CD8-positive, alpha-beta T cell (primary cell): ENCODE measurements at regions of chr20 and their contacts with region 1.

Region 1: GRCh38 chr20:51624157-51624731 is 81.7 kb upstream of the NFATC2 start:
- DNase-seq: peak; percentile 22 to 69 (median 58)
- ATAC-seq: peak; percentile 52
- H3K4me3 ChIP-seq: no peak overlapping the region
- H3K4me3 Mint-ChIP-seq: no peak overlapping the region
- H3K27ac ChIP-seq: no peak overlapping the region
- H3K27ac Mint-ChIP-seq: no peak overlapping the region
- H3K4me1 ChIP-seq: no peaks in the 10 kb centered on the region
- H3K4me1 Mint-ChIP-seq: peaks cover 2% of the 10 kb centered on the region
- H3K27me3 ChIP-seq: no peaks in the 10 kb centered on the region
- H3K27me3 Mint-ChIP-seq: peaks cover 3% of the 10 kb centered on the region
- CTCF ChIP-seq: peak; percentile 69

Region 2: GRCh38 chr20:51220293-51220706 is 403.9 kb before region 1 on chr20:
- CTCF ChIA-PET with region 1: no interaction called
- POLR2A ChIA-PET with region 1: no interaction called
- intact Hi-C with region 1: loop called in 1 of 2 experiments (anchors 10 kb)
- DNase-seq: peak; percentile 21 to 67 (median 50)
- ATAC-seq: peak; percentile 54
- H3K4me3 ChIP-seq: no peak overlapping the region
- H3K4me3 Mint-ChIP-seq: no peak overlapping the region
- H3K27ac ChIP-seq: no peak overlapping the region
- H3K27ac Mint-ChIP-seq: no peak overlapping the region
- H3K4me1 ChIP-seq: no peaks in the 10 kb centered on the region
- H3K4me1 Mint-ChIP-seq: peaks cover 10% of the 10 kb centered on the region
- H3K27me3 ChIP-seq: peaks cover 0 to 4% of the 10 kb centered on the region in 2 experiments
- H3K27me3 Mint-ChIP-seq: peaks cover 57% of the 10 kb centered on the region
- CTCF ChIP-seq: peak; percentile 81

Region 3: DNA sequence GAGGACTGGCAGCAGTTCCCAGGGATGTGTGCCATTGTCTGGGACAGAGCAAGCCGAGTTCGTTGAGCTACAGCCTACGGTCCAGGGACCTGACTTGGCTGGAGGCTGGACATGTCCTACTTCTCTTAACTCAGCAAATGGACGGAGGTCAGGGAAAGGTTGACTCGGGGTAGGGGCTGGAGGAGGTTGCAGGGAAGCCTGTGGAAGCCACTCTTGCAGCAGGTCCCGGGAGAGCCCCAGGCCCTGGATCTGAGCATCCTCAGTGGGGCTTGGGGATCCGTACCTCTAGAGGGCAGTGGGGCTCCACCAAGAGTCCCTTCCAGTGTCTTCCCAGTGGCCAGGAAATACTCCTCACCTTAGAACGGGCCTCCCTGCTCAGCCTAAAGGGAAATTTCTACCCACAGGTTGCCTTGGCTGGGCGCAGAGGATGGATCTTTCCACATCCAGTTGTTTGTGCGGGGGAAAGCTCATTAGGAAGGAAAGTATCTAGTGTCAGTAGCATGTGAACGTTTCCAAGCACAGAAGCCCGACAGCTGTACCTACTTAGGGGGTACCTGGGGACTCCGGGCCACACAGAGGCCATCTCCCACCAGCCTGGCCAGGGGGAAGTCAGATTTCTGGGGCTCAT is 252.0 kb before region 1 on chr20:
- CTCF ChIA-PET with region 1: interaction called, 20 read pairs
- POLR2A ChIA-PET with region 1: no interaction called
- intact Hi-C with region 1: loop called (anchors 1 kb)
- DNase-seq: peak; percentile 22 to 77 (median 58)
- ATAC-seq: peak; percentile 62
- H3K4me3 ChIP-seq: no peak overlapping the region
- H3K4me3 Mint-ChIP-seq: no peak overlapping the region
- H3K27ac ChIP-seq: no peak overlapping the region
- H3K27ac Mint-ChIP-seq: no peak overlapping the region
- H3K4me1 ChIP-seq: no peaks in the 10 kb centered on the region
- H3K4me1 Mint-ChIP-seq: peaks cover 5% of the 10 kb centered on the region
- H3K27me3 ChIP-seq: no peaks in the 10 kb centered on the region
- H3K27me3 Mint-ChIP-seq: no peaks in the 10 kb centered on the region
- CTCF ChIP-seq: peak; percentile 60